HepG2 (cell line): ENCODE measurements at regions of chr7 and their contacts with region 1.

Region 1: GRCh38 chr7:129468087-129468486 is 33.9 kb downstream of the STRIP2 start:
- DNase-seq: no peak
- ATAC-seq: no peak
- H3K4me3 ChIP-seq: no peak overlapping the region
- H3K27ac ChIP-seq: no peak overlapping the region
- H3K4me1 ChIP-seq: no peaks in the 10 kb centered on the region
- H3K27me3 ChIP-seq: no peaks in the 10 kb centered on the region
- CTCF ChIP-seq: no peak
- EP300 ChIP-seq: no peak
- POLR2A ChIP-seq: no peak
- RAD21 ChIP-seq: no peak

Region 2: DNA sequence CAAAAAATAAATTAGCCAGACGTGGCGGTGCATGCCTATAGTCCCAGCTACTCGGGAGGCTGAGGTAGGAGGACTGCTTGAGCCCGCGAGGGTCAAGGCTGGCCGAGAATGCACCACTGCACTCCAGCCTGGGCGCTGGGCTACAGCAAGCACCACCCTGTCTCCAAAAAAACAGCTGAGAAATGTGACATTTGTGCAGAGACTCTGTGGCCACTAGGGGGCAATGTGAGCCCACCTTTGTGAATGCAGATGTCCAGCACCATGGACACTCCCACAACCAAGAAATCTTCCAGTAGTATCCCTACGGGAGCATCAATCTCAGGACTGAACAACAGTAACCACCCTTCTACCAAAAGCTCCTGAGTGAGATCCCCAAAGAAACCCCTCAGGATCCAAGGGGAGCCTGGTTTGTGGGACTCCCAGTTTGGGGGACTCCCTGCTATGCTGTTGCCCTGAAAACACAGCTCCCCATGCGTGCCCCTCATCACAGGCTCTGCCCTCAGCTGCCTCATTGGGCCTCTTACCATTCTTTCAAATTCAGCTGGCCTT is 249.5 kb before region 1 on chr7:
- CTCF ChIA-PET with region 1: interaction called, 12 read pairs
- POLR2A ChIA-PET with region 1: no interaction called
- in situ Hi-C with region 1: no loop called
- intact Hi-C with region 1: loop called (anchors 1 kb)
- DNase-seq: peak; percentile 81
- ATAC-seq: peak; percentile 82
- H3K4me3 ChIP-seq: peak overlapping the region in 1 of 3 experiments; percentile 35; a peak in 1 of 6 replicates
- H3K27ac ChIP-seq: no peak overlapping the region
- H3K4me1 ChIP-seq: peaks cover 34% of the 10 kb centered on the region
- H3K27me3 ChIP-seq: no peaks in the 10 kb centered on the region
- CTCF ChIP-seq: peak; percentile 96
- EP300 ChIP-seq: no peak
- POLR2A ChIP-seq: no peak
- RAD21 ChIP-seq: peak; percentile 90

Region 3: DNA sequence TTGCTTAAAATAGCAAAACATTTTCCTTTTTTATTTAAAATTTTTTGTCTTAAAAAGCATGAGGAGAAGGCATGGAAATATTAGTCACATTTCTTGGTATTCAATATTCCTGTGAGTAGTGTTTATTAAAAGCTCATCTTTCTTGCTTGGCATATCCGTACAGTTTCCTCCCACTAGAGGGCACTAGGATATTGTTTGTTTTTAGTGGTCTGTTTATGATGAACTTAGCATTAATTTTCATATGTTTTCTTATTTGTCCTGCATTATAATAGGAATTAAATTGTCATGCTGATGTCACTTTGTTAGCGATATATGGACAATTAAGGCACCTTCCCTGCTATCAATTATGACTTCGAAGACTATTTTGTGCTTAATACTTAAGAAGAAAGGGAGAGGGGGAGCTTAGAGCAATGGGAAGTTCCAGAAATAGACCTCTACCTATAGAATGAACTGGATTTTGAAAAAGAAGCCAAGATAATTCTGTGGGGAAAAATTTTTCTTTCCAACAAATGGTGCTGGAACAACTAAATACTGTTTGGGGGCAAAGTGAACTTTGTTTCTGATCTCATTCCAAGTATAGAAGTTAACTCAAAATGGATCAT is 124.9 kb before region 1 on chr7:
- CTCF ChIA-PET with region 1: interaction called, 7 read pairs
- POLR2A ChIA-PET with region 1: no interaction called
- in situ Hi-C with region 1: no loop called
- intact Hi-C with region 1: loop called (anchors 1 kb)
- DNase-seq: peak; percentile 19
- ATAC-seq: peak; percentile 43; the same call in 1 of the 3 replicates
- H3K4me3 ChIP-seq: no peak overlapping the region
- H3K27ac ChIP-seq: no peak overlapping the region
- H3K4me1 ChIP-seq: peaks cover 21% of the 10 kb centered on the region; the same call in 1 of the 2 replicates
- H3K27me3 ChIP-seq: no peaks in the 10 kb centered on the region
- CTCF ChIP-seq: peak; percentile 59
- EP300 ChIP-seq: no peak
- POLR2A ChIP-seq: no peak
- RAD21 ChIP-seq: no peak

Region 4: DNA sequence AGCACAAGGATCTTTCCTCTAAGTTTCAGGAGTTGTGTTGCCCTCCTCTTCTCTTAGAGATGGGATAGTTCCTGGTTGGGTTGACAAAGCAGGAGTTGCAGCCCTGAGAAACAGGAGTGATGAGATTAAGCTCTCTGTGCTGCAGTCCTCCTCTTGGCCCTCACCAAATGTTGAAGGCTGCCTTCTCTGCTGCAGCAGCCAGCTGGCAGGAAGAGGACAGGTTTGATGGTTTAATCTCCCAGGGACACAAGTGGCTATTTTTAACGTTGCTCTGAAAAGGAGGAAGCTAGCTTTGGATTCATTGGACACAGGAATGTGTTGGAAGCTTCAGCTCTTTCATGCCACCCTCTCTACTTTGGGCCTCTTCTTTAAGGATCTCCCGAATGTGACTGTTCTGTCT is 24.5 kb before region 1 on chr7:
- CTCF ChIA-PET with region 1: no interaction called
- POLR2A ChIA-PET with region 1: no interaction called
- in situ Hi-C with region 1: no loop called
- intact Hi-C with region 1: no loop called
- DNase-seq: no peak
- ATAC-seq: no peak
- H3K4me3 ChIP-seq: no peak overlapping the region
- H3K27ac ChIP-seq: no peak overlapping the region
- H3K4me1 ChIP-seq: no peaks in the 10 kb centered on the region
- H3K27me3 ChIP-seq: no peaks in the 10 kb centered on the region
- CTCF ChIP-seq: no peak
- EP300 ChIP-seq: no peak
- POLR2A ChIP-seq: no peak
- RAD21 ChIP-seq: no peak

Region 5: DNA sequence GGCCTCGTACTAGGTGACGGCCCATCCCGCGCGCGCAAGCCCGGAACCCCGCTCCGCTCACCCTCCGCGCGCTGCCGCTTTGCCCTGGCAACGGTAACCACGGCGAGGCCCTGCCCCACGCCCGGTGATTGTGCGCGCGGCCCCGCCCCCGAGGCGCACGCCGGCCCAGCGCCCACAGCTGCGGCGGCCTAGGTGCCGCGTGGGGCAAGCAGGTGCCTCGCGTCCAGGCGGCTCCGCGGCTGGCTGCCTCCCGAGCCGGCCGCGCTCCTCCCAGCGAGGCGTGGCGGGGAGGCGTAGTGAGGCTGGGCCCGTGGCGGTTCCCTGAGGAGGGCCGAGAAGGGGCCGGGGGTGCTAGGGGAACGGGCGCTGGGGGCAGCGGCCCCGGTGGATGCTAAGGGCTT is 34.3 kb after region 1 on chr7 and contains the start of gene SMKR1:
- CTCF ChIA-PET with region 1: no interaction called
- POLR2A ChIA-PET with region 1: no interaction called
- in situ Hi-C with region 1: no loop called
- intact Hi-C with region 1: no loop called
- DNase-seq: no peak
- ATAC-seq: peak; percentile 77
- H3K4me3 ChIP-seq: peak within 1 kb of the TSS; percentile 51 to 70 (median 55)
- H3K27ac ChIP-seq: no peak within 1 kb of the TSS
- H3K4me1 ChIP-seq: peaks cover 22% of the 10 kb centered on the region
- H3K27me3 ChIP-seq: peaks cover 2 to 36% of the 10 kb centered on the region in 2 experiments; a peak in 4 of 5 replicates
- CTCF ChIP-seq: no peak
- EP300 ChIP-seq: no peak
- POLR2A ChIP-seq: no peak
- RAD21 ChIP-seq: no peak
- total RNA-seq, gene SMKR1: not detected in 2 replicates

Region 6: GRCh38 chr7:129644634-129645230 is 176.6 kb after region 1 on chr7:
- CTCF ChIA-PET with region 1: no interaction called
- POLR2A ChIA-PET with region 1: no interaction called
- in situ Hi-C with region 1: no loop called
- intact Hi-C with region 1: loop called (anchors 1 kb)
- DNase-seq: peak; percentile 37
- ATAC-seq: no peak; the same call in 2 of the 3 replicates
- H3K4me3 ChIP-seq: no peak overlapping the region
- H3K27ac ChIP-seq: no peak overlapping the region
- H3K4me1 ChIP-seq: no peaks in the 10 kb centered on the region
- H3K27me3 ChIP-seq: no peaks in the 10 kb centered on the region
- CTCF ChIP-seq: peak; percentile 39
- EP300 ChIP-seq: no peak
- POLR2A ChIP-seq: no peak
- RAD21 ChIP-seq: no peak; the same call in 1 of the 2 replicates